MCF 10A (cell line): ENCODE measurements at regions of chr17 and their contacts with region 1.

Region 1: GRCh38 chr17:43907425-43907981 is at the start of gene MPP2:
- DNase-seq: peak; percentile 20
- H3K4me3 Mint-ChIP-seq: no peak within 1 kb of the TSS
- H3K27ac Mint-ChIP-seq: no peak within 1 kb of the TSS
- H3K4me1 Mint-ChIP-seq: no peaks in the 10 kb centered on the region
- H3K27me3 Mint-ChIP-seq: peaks cover 27% of the 10 kb centered on the region
- CTCF ChIP-seq: no peak
- total RNA-seq, gene MPP2: not detected in 2 replicates

Region 2: DNA sequence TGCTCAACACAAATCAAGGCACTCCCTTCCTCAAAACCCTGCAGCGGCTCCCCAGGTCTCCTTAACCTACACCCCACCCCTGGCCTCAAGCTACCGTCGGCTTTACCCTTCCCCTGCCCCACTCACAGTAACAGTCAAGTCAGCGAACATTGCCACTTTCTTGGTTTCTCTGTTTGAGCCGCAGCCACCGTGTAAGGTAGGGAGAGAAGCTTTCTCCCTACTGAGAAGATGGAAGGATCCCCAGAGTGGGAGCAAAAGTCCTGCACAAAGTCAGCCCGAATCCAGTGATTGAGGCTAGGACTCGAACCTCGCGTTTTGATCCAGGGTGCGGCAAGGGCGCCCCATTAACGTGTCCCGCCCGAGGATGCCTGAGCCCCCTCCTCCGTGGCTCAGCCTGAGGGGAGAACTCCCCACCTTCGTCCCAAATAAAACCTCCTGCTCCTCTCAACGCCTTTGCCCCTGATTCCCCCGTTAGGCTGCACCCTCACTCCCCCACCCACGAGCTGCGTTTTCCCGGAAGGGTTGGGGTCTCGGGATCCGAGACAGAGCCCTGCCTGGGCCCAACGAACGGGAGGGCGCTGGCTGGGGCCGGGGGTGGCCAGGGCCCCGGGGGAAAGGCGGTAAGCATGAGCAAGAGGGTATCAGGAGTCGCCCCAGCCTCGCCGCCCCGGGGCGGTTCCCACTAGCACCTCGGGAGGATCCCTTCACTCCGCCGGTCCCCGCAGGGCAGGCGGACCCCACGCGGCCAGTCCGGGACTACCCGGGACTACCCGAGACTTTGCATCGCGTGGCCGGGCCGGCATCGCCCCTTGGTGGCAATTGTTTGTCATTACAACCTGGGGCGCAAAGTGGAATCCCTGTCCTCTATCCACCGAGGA is 87.0 kb after region 1 on chr17:
- CTCF ChIA-PET with region 1: interaction called, 17 read pairs
- POLR2A ChIA-PET with region 1: no interaction called
- intact Hi-C with region 1: no loop called
- DNase-seq: peak; percentile 69
- H3K4me3 Mint-ChIP-seq: peak overlapping the region; percentile 64
- H3K27ac Mint-ChIP-seq: no peak overlapping the region
- H3K4me1 Mint-ChIP-seq: peaks cover 8% of the 10 kb centered on the region
- H3K27me3 Mint-ChIP-seq: no peaks in the 10 kb centered on the region
- CTCF ChIP-seq: peak; percentile 95

Region 3: GRCh38 chr17:44083250-44083849 is 175.8 kb after region 1 on chr17:
- CTCF ChIA-PET with region 1: no interaction called
- POLR2A ChIA-PET with region 1: no interaction called
- intact Hi-C with region 1: no loop called
- DNase-seq: peak; percentile 69
- H3K4me3 Mint-ChIP-seq: no peak overlapping the region
- H3K27ac Mint-ChIP-seq: no peak overlapping the region
- H3K4me1 Mint-ChIP-seq: peaks cover 21% of the 10 kb centered on the region
- H3K27me3 Mint-ChIP-seq: no peaks in the 10 kb centered on the region
- CTCF ChIP-seq: peak; percentile 45

Region 4: DNA sequence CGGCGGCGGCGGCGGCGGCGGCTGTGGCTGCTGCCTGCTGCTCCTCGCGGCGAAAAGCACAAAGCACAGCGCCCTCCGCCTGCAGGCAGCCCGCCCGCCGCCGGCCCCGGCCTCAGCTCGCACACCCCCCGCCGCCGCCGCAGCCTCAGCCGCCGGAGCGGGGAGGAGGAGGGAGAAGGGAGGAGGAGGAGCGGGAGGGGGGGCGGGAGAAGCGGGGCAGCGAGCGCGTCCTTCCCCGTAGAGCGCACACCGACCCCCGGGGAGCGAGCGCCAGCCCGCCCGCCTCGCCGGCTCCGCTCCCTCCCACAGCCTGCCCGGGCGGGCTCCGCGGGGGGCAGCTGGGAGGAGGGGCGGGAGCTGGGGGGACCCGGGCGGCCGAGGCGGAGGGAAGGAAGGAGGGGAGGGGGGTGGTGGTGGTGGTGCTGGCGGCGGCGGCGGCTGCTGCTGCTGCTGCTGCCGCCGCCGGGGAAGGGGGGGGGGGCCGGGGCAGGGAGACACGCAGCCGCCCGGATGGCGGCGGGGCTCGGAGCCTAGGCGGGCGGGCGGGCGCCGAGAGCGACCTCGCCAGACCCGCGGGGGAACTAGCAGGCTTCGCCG is 312.2 kb after region 1 on chr17 and contains the start of gene UBTF:
- CTCF ChIA-PET with region 1: no interaction called
- POLR2A ChIA-PET with region 1: no interaction called
- intact Hi-C with region 1: no loop called
- DNase-seq: peak; percentile 40
- H3K4me3 Mint-ChIP-seq: peak within 1 kb of the TSS; percentile 98
- H3K27ac Mint-ChIP-seq: peak within 1 kb of the TSS; percentile 86
- H3K4me1 Mint-ChIP-seq: peaks cover 30% of the 10 kb centered on the region
- H3K27me3 Mint-ChIP-seq: no peaks in the 10 kb centered on the region
- CTCF ChIP-seq: no peak
- total RNA-seq, gene UBTF: 71.4 and 79.7 TPM in 2 replicates